Endothelial cell of umbilical vein (primary cell): ENCODE measurements at regions of chr7 and their contacts with region 1.

Region 1: DNA sequence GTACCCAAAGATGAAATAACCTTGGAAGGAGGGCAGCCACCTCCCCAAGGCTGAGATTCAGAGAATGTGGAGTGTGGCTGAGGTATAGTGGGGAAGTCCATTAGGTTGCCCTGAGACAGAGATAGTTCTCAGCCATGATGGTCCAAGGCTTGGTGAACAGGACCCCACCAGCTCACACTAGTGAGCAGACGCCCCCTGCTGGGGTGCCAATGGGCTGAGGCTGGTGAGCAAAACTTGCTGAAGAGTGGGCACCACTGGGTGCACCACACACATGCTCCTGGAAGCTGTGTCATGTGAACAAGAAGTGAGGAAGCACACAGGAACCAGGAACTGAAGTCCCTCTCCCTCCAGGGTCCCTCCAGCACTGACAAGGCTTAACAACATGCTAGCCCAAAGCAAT is 8.9 kb downstream of the FBXL13 start:
- DNase-seq: peak; percentile 51
- H3K4me3 ChIP-seq: no peak overlapping the region
- H3K27ac ChIP-seq: no peak overlapping the region
- H3K4me1 ChIP-seq: peaks cover 8% of the 10 kb centered on the region
- H3K27me3 ChIP-seq: no peaks in the 10 kb centered on the region
- CTCF ChIP-seq: peak; percentile 77 to 79
- POLR2A ChIP-seq: no peak

Region 2: GRCh38 chr7:102819151-102819550 is 246.5 kb before region 1 on chr7:
- CTCF ChIA-PET with region 1: interaction called, 18 read pairs
- POLR2A ChIA-PET with region 1: interaction called, 11 read pairs
- dilution Hi-C with region 1: no loop called
- intact Hi-C with region 1: no loop called
- DNase-seq: peak; percentile 89
- H3K4me3 ChIP-seq: no peak overlapping the region
- H3K27ac ChIP-seq: peak overlapping the region; percentile 25
- H3K4me1 ChIP-seq: peaks cover 25% of the 10 kb centered on the region
- H3K27me3 ChIP-seq: no peaks in the 10 kb centered on the region
- CTCF ChIP-seq: no peak
- POLR2A ChIP-seq: no peak

Region 3: GRCh38 chr7:102883098-102883860 is 182.4 kb before region 1 on chr7:
- CTCF ChIA-PET with region 1: interaction called, 12 read pairs
- POLR2A ChIA-PET with region 1: no interaction called
- dilution Hi-C with region 1: no loop called
- intact Hi-C with region 1: no loop called
- DNase-seq: peak; percentile 82
- H3K4me3 ChIP-seq: no peak overlapping the region
- H3K27ac ChIP-seq: peak overlapping the region; percentile 47
- H3K4me1 ChIP-seq: peaks cover 27% of the 10 kb centered on the region
- H3K27me3 ChIP-seq: no peaks in the 10 kb centered on the region
- CTCF ChIP-seq: no peak
- POLR2A ChIP-seq: no peak

Region 4: DNA sequence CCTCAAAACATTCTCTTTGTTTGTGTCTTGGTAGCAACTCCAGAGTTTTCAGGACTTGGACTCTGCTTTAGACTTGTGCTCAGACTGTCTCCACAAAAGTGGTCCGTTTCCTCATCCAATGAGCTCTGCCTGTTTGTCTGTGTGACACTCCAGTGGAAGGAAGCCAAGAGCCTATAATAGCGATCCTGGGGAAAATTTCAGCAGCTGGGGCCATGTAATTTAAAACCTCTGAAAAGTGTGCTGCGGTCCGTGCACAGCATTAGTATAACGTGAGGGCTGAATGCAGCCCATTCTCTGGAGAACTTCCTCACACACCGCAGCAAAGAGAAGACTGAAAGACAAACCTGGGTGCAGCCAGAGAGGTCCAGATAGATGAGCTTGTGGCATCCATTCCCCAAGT is 152.9 kb before region 1 on chr7 and contains the start of gene LRRC17:
- CTCF ChIA-PET with region 1: interaction called, 17 read pairs
- POLR2A ChIA-PET with region 1: no interaction called
- dilution Hi-C with region 1: no loop called
- intact Hi-C with region 1: no loop called
- DNase-seq: peak; percentile 85
- H3K4me3 ChIP-seq: peak within 1 kb of the TSS; percentile 25 to 77 (median 75)
- H3K27ac ChIP-seq: peak within 1 kb of the TSS; percentile 68
- H3K4me1 ChIP-seq: peaks cover 20% of the 10 kb centered on the region
- H3K27me3 ChIP-seq: no peaks in the 10 kb centered on the region
- CTCF ChIP-seq: no peak
- POLR2A ChIP-seq: no peak
- total RNA-seq, gene LRRC17: 22.7 and 31.9 TPM in 2 replicates

Region 5: DNA sequence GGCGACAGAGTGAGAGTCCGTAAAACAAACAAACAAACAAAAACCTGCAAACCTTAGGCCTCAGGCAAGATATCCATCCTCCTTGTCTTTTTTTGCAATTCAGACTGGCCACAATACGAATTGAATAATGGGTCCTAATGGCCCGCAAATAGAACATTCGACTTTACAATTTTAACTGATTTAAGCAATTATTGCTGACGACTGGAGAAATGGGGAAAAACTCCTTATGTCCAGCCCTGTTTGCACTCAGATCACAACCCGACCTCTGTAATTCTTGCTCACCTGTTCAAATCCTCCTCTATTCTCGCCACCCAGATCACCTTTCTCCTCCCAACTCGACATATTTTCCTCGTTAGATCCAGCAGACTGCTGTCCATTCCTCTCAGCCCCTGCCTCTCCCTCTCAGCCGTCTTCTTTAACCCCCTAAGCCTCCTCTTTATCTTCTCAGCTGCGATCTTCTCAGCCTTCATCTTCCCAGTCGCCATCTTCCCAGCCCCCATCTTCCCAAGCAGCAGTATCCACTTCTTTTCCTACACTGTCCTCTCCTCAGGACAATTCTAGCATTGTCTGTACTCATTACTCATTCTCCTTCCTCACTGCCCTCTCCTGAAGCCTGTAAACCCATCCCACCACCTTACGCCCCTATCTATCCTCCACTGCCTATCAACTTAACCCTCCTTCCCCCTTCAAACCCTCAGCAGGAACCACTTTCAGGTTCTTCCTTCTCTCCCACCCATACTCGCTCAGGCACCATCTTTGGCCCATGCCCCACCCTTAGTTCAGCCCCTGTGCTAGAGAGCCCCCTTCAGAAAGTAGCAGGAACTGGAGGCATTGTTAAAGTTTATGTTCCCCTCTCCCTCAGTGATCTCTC is 91.1 kb before region 1 on chr7:
- CTCF ChIA-PET with region 1: interaction called, 9 read pairs
- POLR2A ChIA-PET with region 1: no interaction called
- dilution Hi-C with region 1: no loop called
- intact Hi-C with region 1: loop called (anchors 5 kb)
- DNase-seq: no peak
- H3K4me3 ChIP-seq: no peak overlapping the region
- H3K27ac ChIP-seq: peak overlapping the region; percentile 88
- H3K4me1 ChIP-seq: peaks cover 19% of the 10 kb centered on the region
- H3K27me3 ChIP-seq: no peaks in the 10 kb centered on the region
- CTCF ChIP-seq: no peak
- POLR2A ChIP-seq: no peak

Region 6: DNA sequence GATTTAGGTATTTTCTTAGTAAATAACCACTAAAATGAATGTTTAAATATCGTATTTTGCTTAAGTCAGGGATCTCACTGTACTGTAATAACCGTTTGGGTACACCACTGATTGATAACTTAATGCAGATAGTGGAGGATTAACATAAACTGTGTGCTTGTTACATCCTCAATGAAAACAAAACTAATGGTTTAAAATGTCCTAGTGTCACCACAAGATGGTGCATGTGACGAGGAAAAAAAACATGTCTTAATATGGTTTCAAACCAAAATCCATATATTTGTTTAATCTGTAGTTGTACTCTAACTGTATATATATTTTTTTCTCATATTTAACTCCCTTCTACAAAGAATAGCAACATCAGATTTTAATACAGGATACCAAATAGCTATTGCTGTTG is 28.4 kb after region 1 on chr7:
- CTCF ChIA-PET with region 1: interaction called, 3 read pairs
- POLR2A ChIA-PET with region 1: interaction called, 12 read pairs
- dilution Hi-C with region 1: no loop called
- intact Hi-C with region 1: no loop called
- DNase-seq: no peak
- H3K4me3 ChIP-seq: no peak overlapping the region
- H3K27ac ChIP-seq: no peak overlapping the region
- H3K4me1 ChIP-seq: no peaks in the 10 kb centered on the region
- H3K27me3 ChIP-seq: no peaks in the 10 kb centered on the region
- CTCF ChIP-seq: no peak
- POLR2A ChIP-seq: no peak

Region 7: GRCh38 chr7:103344453-103345149 is 278.9 kb after region 1 on chr7 and contains the start of gene DNAJC2:
- CTCF ChIA-PET with region 1: no interaction called
- POLR2A ChIA-PET with region 1: no interaction called
- dilution Hi-C with region 1: no loop called
- intact Hi-C with region 1: no loop called
- DNase-seq: peak; percentile 86
- H3K4me3 ChIP-seq: peak within 1 kb of the TSS; percentile 91 to 99 (median 94)
- H3K27ac ChIP-seq: peak within 1 kb of the TSS; percentile 85
- H3K4me1 ChIP-seq: peaks cover 29% of the 10 kb centered on the region
- H3K27me3 ChIP-seq: no peaks in the 10 kb centered on the region
- CTCF ChIP-seq: no peak
- POLR2A ChIP-seq: peak; percentile 88
- total RNA-seq, gene DNAJC2: 33.3 and 36.3 TPM in 2 replicates